Transverse colon (tissue), 4 donors: ENCODE measurements at regions of chr4 and their contacts with region 1.

Region 1: DNA sequence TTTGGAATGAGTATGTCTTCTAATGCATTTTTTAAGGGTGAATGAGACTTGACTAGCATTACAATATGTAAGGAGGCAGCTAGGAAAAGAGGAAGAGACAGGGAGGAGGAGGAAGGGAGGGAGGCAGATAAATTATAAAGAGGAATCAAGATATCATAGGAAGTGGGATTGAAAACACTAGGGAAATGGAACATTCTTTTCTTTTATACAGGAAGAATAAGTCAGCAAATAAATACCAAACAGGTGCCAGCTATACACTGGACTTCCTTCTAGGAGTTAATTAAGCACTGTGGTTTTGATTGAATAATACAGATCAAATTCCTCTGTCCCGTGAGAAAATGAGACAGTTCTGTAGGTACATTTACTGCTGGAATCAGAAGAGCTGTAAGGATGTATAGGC is 78.6 kb downstream of the PACRGL start:
- DNase-seq: no peak
- H3K4me3 ChIP-seq: no peak overlapping the region
- H3K27ac ChIP-seq: no peak overlapping the region
- H3K4me1 ChIP-seq: peaks cover 0 to under 1% (median 0%) of the 10 kb centered on the region in 4 donors
- H3K27me3 ChIP-seq: no peaks in the 10 kb centered on the region
- CTCF ChIP-seq: no peak
- EP300 ChIP-seq: no peak
- POLR2A ChIP-seq: no peak

Region 2: GRCh38 chr4:20166544-20166943 is 612.4 kb before region 1 on chr4:
- in situ Hi-C with region 1: no loop called
- intact Hi-C with region 1: loop called (anchors 5 kb)
- DNase-seq: no peak
- H3K4me3 ChIP-seq: no peak overlapping the region
- H3K27ac ChIP-seq: no peak overlapping the region
- H3K4me1 ChIP-seq: no peaks in the 10 kb centered on the region
- H3K27me3 ChIP-seq: no peaks in the 10 kb centered on the region
- CTCF ChIP-seq: no peak
- EP300 ChIP-seq: no peak
- POLR2A ChIP-seq: no peak

Region 3: GRCh38 chr4:20395160-20395773 is 383.6 kb before region 1 on chr4:
- in situ Hi-C with region 1: no loop called
- intact Hi-C with region 1: no loop called
- DNase-seq: peak; percentile 44
- H3K4me3 ChIP-seq: no peak overlapping the region
- H3K27ac ChIP-seq: no peak overlapping the region
- H3K4me1 ChIP-seq: no peaks in the 10 kb centered on the region
- H3K27me3 ChIP-seq: no peaks in the 10 kb centered on the region
- CTCF ChIP-seq: peak; percentile 26 to 55 (median 45)
- EP300 ChIP-seq: no peak
- POLR2A ChIP-seq: no peak